ENCODE measurements at regions of chr7 and their contacts with region 1.

Region 1: GRCh38 chr7:35975851-35976454 is 175.1 kb downstream of the SEPTIN7 start:
- DNase-seq: no peak
- ATAC-seq: peak; percentile 82
- H3K4me3 Mint-ChIP-seq: no peak overlapping the region
- H3K27ac Mint-ChIP-seq: no peak overlapping the region
- H3K4me1 Mint-ChIP-seq: peaks cover 4% of the 10 kb centered on the region
- H3K27me3 Mint-ChIP-seq: peaks cover 6% of the 10 kb centered on the region
- CTCF ChIP-seq: peak; percentile 55

Region 2: DNA sequence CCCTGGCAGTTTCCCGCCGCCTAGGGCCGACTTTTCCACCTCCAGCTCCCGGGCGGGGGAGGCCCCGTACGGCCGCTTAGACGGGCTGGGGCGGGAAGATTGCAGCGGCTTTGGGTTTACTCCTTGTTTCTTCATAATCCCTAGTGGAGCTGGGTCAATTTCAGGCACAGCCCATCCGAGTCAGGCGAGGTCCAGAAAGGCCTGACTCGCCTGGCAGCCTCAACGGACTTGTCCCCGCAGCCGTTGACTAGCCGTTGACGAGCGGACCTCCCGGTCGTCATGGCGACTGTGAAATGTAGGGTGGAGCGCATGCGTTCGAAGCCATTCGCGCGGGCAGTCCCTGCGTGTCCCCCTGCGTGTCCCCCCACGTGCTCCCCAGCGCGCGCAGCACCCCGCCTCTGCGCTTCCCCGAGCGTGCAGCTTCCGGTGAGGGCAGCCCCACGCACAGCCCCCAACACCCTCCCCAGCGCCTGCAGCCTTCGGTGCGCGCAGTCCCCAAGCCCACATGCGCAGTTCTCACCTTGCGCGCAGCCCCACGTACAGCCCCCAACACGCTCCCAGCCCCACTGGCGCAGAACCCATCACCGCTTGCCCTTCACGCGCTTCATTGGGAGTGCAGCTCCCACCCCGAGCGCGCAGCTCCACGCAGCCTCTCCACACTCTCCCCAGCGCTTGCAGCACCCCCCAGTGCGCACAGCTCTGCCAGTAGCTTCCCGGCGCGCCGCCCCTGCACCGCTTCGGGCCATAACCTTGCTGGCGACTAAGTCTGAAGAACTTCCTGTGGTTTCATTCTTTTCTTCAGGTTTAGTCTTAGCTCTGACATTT is 789.8 kb before region 1 on chr7:
- CTCF ChIA-PET with region 1: no interaction called
- POLR2A ChIA-PET with region 1: no interaction called
- intact Hi-C with region 1: loop called (anchors 10 kb)
- DNase-seq: no peak
- ATAC-seq: no peak
- H3K4me3 Mint-ChIP-seq: peak overlapping the region; percentile 45
- H3K27ac Mint-ChIP-seq: no peak overlapping the region
- H3K4me1 Mint-ChIP-seq: peaks cover 10% of the 10 kb centered on the region
- H3K27me3 Mint-ChIP-seq: peaks cover 25% of the 10 kb centered on the region
- CTCF ChIP-seq: no peak

Region 3: GRCh38 chr7:35630024-35630972 is 345.7 kb before region 1 on chr7:
- CTCF ChIA-PET with region 1: no interaction called
- POLR2A ChIA-PET with region 1: no interaction called
- intact Hi-C with region 1: loop called (anchors 1 kb)
- DNase-seq: no peak
- ATAC-seq: no peak
- H3K4me3 Mint-ChIP-seq: no peak overlapping the region
- H3K27ac Mint-ChIP-seq: no peak overlapping the region
- H3K4me1 Mint-ChIP-seq: no peaks in the 10 kb centered on the region
- H3K27me3 Mint-ChIP-seq: no peaks in the 10 kb centered on the region
- CTCF ChIP-seq: no peak

Region 4: GRCh38 chr7:35707422-35707821 is 268.5 kb before region 1 on chr7:
- CTCF ChIA-PET with region 1: interaction called, 3 read pairs
- POLR2A ChIA-PET with region 1: no interaction called
- intact Hi-C with region 1: loop called (anchors 5 kb)
- DNase-seq: no peak
- ATAC-seq: no peak
- H3K4me3 Mint-ChIP-seq: no peak overlapping the region
- H3K27ac Mint-ChIP-seq: no peak overlapping the region
- H3K4me1 Mint-ChIP-seq: peaks cover 11% of the 10 kb centered on the region
- H3K27me3 Mint-ChIP-seq: no peaks in the 10 kb centered on the region
- CTCF ChIP-seq: no peak

Region 5: DNA sequence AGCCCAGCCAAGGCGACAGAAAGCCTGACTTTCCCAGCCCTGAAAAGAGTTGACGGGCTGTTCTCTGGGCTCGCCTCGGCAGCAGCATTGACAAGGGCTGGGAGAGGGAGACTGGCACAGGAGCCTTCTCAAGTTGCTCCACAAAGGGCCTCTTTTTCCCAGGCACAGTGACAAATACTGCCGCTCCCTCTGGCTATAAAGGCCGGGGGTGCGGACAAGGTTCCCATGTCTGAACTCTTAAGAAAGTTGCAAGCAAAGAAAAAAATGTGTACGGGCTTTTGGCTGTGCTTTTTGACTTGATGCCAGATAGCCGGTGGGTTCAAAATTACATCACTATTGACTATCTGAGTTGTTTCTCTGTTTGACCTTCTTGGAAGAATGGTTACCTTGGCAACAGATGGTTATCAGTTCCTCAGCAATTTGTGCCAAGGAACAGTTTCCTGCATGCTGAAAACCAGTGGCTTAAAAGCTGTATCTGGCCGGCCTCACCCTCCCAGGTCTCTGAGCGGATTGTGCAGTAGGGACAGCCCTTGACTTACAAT is 61.2 kb after region 1 on chr7:
- CTCF ChIA-PET with region 1: no interaction called
- POLR2A ChIA-PET with region 1: no interaction called
- intact Hi-C with region 1: no loop called
- DNase-seq: no peak
- ATAC-seq: no peak
- H3K4me3 Mint-ChIP-seq: no peak overlapping the region
- H3K27ac Mint-ChIP-seq: no peak overlapping the region
- H3K4me1 Mint-ChIP-seq: no peaks in the 10 kb centered on the region
- H3K27me3 Mint-ChIP-seq: peaks cover 11% of the 10 kb centered on the region
- CTCF ChIP-seq: no peak

Measured in activated B cell treated with CpG ODN at 0.5 μM for 24 hours (primary cell).